Activated CD4-positive, alpha-beta T cell treated with anti-CD3 and anti-CD28 coated beads, Interleukin-2, amount 10 ng/mL, durations not matched to agents 24 days and 14 days (primary cell): ENCODE measurements at regions of chr3 and their contacts with region 1.

Region 1: GRCh38 chr3:39406368-39407258 is at the start of gene RPSA:
- DNase-seq: peak; percentile 99
- H3K4me3 Mint-ChIP-seq: peak within 1 kb of the TSS; percentile 92
- H3K27ac Mint-ChIP-seq: peak within 1 kb of the TSS; percentile 99
- H3K4me1 Mint-ChIP-seq: peaks cover 40% of the 10 kb centered on the region
- H3K27me3 Mint-ChIP-seq: peaks cover 2% of the 10 kb centered on the region
- total RNA-seq, gene RPSA: 1,932 and 1,935 TPM in 2 replicates

Region 2: DNA sequence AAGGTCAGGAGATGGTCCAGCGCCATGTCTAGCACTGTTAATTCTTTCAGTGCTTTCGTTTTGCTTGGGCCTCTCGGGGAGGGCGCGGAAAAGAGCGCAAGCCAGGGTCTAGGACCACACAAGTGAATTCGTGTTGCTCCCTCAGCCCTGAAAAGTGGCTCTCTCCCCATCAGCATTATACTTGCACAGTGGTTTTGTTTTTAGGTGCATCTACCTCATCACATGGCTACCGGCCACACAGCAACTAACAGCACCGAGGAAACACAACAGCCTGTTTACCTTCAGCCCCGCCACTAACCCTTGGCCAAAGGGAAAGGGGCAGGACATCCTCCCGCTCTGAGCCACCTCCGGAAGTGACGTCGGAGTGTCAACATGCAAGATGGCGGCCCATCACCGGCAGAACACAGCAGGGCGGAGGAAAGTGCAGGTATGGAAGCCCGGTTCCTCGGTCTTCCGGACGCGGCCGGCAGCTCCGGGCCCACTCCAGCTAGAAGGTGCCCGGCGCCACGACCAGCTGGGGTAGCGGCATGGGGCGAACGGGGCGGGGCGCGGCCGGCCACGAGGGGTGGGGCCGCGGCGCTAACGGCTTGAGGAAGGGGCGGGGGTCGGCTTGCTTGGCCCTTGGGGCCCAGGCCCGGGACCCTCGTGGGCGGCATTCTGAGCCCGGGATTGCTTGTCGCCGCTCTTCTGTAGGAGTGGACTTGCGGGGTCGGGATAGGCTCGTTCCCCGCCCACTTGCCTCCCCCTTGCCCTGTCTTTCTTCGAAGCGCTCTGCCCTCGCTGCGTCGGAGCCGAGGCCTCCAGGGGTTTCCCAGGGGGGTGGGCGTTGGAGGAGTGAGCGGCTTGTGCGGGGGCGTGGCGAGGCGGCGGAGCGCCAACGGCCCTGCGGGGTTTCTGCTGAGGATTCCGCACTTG is 354.7 kb before region 1 on chr3 and contains the starts of genes SCN11A and WDR48:
- intact Hi-C with region 1: loop called (anchors 1 kb)
- DNase-seq: peak; percentile 98
- H3K4me3 Mint-ChIP-seq: peak within 1 kb of the TSS; percentile 92
- H3K27ac Mint-ChIP-seq: peak within 1 kb of the TSS; percentile 96
- H3K4me1 Mint-ChIP-seq: peaks cover 22% of the 10 kb centered on the region
- H3K27me3 Mint-ChIP-seq: peaks cover 2% of the 10 kb centered on the region
- total RNA-seq, gene SCN11A: not detected in 2 replicates
- total RNA-seq, gene WDR48: 35.4 and 40.5 TPM in 2 replicates

Region 3: DNA sequence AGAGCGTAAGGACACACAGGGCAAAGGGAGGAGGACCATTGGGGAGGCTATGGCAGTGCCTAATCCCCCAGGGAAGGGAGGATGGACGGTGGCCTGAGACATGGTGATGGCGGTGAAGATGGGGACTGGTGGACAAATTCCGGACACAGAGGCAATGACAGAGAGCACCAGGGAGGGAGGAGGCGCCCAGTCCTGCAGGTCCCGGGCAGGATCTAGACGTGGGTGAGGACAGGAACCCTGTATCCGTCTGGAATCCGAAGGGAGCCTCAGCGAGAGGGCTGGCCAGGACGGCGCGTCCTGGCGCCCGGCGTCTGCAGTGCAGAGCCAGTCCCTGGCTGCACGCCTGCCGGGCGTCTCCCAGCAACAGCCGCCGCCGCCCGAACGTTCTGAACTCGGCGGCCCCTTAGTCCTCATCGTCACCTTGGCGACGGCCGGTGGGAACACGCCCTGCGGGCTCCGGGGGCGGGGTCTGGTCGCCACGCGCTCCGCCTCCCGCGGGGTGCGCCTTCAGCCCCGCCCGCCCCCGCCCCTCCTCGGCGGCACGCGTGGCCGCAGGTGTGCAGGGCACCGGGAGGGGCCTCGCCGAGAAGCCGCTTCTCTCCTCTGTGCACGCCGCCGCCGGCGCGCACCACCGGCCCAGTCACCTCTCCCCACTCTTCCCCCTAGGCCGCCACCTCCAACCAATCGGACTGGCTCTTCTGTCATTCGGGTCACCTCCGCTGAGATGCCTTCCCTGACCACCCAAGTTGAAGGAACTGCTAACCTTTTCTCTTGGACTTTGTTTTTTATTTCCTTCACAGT is 225.9 kb before region 1 on chr3:
- intact Hi-C with region 1: loop called (anchors 1 kb)
- DNase-seq: peak; percentile 97
- H3K4me3 Mint-ChIP-seq: peak overlapping the region; percentile 84
- H3K27ac Mint-ChIP-seq: peak overlapping the region; percentile 69
- H3K4me1 Mint-ChIP-seq: peaks cover 50% of the 10 kb centered on the region
- H3K27me3 Mint-ChIP-seq: no peaks in the 10 kb centered on the region

Region 4: DNA sequence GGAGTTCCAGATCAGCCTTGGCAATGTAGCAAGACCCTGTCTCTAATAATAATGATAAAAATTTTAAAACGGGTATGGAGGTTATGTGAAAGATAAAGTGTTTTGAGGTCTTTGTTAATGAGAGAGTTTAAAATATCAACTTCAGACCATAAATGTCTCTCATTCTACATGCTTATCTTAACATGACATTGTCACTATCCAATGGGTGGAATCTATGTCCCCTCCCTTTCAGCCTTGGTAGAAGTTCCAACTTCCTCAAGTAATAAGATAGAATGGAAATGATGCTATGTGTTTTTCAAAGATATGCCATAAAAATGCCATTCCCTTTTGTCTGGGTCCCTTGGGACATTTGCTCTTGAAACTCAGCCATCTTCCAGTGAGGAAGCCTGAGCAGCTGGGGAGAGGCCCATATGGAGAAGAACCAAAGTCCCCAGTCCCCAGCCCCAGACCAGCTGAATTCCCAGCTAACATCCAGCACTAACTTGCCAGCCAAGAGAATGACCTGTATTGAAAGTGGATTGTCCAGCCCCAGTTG is 16.9 kb after region 1 on chr3:
- intact Hi-C with region 1: no loop called
- DNase-seq: no peak
- H3K4me3 Mint-ChIP-seq: no peak overlapping the region
- H3K27ac Mint-ChIP-seq: no peak overlapping the region
- H3K4me1 Mint-ChIP-seq: no peaks in the 10 kb centered on the region
- H3K27me3 Mint-ChIP-seq: peaks cover 3% of the 10 kb centered on the region

Region 5: GRCh38 chr3:39447637-39448483 is 41.2 kb after region 1 on chr3:
- intact Hi-C with region 1: no loop called
- DNase-seq: peak; percentile 88
- H3K4me3 Mint-ChIP-seq: no peak overlapping the region
- H3K27ac Mint-ChIP-seq: no peak overlapping the region
- H3K4me1 Mint-ChIP-seq: no peaks in the 10 kb centered on the region
- H3K27me3 Mint-ChIP-seq: peaks cover 17% of the 10 kb centered on the region

Region 6: GRCh38 chr3:40309418-40309924 is 902.9 kb after region 1 on chr3 and contains the start of gene EIF1B:
- intact Hi-C with region 1: loop called (anchors 10 kb)
- DNase-seq: peak; percentile 100
- H3K4me3 Mint-ChIP-seq: peak within 1 kb of the TSS; percentile 100
- H3K27ac Mint-ChIP-seq: peak within 1 kb of the TSS; percentile 99
- H3K4me1 Mint-ChIP-seq: peaks cover 17% of the 10 kb centered on the region
- H3K27me3 Mint-ChIP-seq: no peaks in the 10 kb centered on the region
- total RNA-seq, gene EIF1B: 46.1 and 47.7 TPM in 2 replicates